ENCODE measurements at regions of chr4 and their contacts with region 1.

Region 1: DNA sequence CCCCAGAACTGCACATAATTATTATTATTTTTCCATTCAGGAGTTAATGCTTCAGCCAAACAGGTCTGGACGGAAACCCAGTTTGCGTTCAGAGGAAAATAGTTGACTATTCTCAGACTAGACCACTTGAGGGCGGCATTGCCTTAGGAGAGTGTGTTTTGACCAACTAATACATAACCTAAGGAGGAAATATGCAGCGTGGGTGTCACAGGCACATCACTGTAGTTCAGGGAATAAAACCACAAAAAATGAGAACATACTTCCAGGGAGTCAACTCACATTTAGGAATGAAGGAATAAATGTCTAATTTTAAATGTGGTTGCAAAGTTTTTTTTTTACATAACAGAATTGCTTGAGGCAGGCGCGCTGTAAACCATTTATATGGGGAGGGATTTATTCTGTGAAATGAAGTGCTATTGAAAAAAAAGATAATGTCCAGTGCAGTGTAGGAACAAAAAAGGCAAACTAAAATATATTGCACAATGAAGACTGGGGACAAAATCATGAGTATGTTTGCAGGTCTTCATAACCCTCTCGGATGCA is 93.3 kb downstream of the SYNPO2 start:
- DNase-seq: peak; percentile 73

Region 2: DNA sequence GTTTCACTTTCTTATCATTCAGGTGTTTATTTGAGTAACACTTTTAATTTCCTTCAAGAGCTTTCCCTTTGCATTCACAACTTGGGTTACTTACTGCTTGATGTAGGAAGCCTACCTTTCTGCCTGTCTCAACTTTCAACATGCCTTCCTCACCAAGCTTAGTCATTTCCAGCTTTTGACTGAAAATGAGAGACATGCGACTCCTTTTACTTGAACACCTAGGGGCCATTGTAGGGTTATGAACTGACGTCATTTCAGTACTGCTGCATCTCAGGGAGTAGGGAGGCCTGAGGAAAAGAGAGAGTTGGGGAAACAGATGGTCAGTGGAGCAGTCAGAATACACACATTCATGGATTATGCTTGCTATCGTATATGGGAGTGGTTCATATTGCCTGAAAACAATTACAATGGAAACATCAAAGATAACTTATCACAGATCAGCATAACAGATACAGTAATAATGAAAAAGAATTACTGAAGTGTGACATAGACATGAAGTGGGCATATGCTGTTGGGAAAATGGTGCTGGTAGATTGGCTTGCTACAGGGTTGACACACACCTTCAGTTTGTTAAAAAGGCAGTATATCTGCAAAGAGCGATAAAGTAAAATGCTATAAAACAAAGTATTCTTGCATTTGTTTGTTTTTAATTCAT is 256.3 kb after region 1 on chr4:
- in situ Hi-C with region 1: no loop called
- DNase-seq: no peak

Region 3: DNA sequence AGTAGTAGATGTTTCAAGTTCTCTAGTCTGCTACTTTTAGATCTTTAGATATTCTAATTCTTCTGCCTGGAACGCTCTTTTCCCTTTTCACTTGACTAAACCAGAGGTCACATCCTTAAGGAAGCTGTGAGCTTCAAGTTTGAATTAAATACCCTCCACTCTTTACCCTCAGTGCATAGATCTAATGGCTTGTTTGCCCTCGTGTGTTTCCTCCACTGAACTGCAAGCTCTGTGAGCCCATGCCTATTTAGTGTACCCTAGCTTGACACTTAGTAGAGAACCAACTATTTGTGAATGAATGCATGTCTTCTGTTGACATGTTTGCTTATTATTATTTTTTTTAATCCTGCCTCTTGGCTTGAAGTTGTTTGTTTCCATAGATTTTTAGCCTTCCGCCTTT is 508.4 kb after region 1 on chr4:
- in situ Hi-C with region 1: loop called (anchors 25 kb)
- DNase-seq: peak; percentile 37